AG04450 (cell line): ENCODE measurements at regions of chr10 and their contacts with region 1.

Region 1: GRCh38 chr10:124918191-124918830 is 23.6 kb upstream of the ZRANB1 start:
- DNase-seq: no peak
- H3K4me3 ChIP-seq: peak overlapping the region; percentile 82
- H3K27ac ChIP-seq: peak overlapping the region; percentile 49
- H3K27me3 ChIP-seq: no peaks in the 10 kb centered on the region
- CTCF ChIP-seq: no peak

Region 2: GRCh38 chr10:124860426-124860825 is 57.9 kb before region 1 on chr10:
- CTCF ChIA-PET with region 1: no interaction called
- POLR2A ChIA-PET with region 1: no interaction called
- DNase-seq: no peak
- H3K4me3 ChIP-seq: no peak overlapping the region
- H3K27ac ChIP-seq: no peak overlapping the region
- H3K27me3 ChIP-seq: peaks cover 3% of the 10 kb centered on the region
- CTCF ChIP-seq: no peak

Region 3: DNA sequence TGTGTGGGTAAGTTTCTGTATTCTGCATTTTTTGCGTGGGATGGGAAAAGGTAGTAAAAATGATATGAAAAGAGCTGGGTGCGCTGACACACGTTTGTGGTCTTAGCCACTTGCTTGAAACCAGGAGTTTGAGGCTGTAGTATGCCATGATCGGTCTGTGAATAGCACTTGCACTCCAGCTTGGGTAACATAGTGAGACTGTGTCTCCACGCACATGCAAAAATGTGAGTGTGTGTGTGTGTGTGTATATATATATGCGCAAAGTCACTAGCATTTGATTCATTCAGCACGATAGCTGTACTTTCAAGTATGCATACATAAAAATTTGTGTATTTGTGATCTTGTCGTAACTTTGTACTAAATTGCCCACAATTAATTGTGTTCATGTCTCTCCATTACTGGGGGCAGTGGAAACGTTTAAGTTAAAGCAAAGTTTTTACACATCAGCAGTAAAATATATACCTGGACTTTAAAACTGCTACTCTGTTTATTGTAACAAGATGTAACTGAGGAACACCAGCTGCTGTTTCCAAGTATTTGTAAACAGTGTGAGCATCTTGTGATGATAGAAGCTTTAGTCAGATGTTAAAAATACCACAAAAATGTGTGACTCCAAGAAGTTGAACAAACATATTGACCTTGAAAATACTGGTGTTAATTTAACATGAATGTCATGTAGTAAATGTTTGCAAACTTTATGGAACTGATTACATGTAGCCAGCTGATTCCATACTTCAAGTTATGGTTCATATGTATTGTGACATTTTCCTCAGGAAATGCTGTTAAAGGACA is 25.2 kb after region 1 on chr10:
- CTCF ChIA-PET with region 1: interaction called, 4 read pairs
- POLR2A ChIA-PET with region 1: interaction called, 10 read pairs
- DNase-seq: peak; percentile 88
- H3K4me3 ChIP-seq: no peak overlapping the region
- H3K27ac ChIP-seq: peak overlapping the region; percentile 79
- H3K27me3 ChIP-seq: no peaks in the 10 kb centered on the region
- CTCF ChIP-seq: no peak

Region 4: GRCh38 chr10:125006921-125007426 is 88.7 kb after region 1 on chr10:
- CTCF ChIA-PET with region 1: no interaction called
- POLR2A ChIA-PET with region 1: no interaction called
- DNase-seq: no peak
- H3K4me3 ChIP-seq: no peak overlapping the region
- H3K27ac ChIP-seq: no peak overlapping the region
- H3K27me3 ChIP-seq: no peaks in the 10 kb centered on the region
- CTCF ChIP-seq: no peak

Region 5: DNA sequence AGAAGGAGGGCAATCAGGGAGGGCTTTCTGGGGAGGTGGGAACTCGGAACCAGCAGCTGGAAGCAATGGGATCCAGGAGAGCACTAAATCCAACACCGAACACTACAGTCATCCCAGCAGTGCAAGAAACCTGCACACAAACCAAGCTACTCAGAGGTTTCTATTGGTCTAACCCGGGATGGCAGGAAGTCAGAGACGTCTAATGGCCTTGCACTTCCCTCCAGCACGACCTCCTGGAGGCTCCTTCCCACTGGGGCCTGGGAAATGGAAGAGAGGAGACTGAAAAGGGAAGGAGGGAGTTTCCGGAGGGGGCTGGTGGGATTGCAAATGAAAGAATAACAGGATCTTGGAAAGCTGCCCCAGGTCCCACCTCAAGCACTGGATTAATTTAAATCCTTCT is 708.4 kb after region 1 on chr10:
- CTCF ChIA-PET with region 1: no interaction called
- POLR2A ChIA-PET with region 1: no interaction called
- DNase-seq: no peak
- H3K4me3 ChIP-seq: no peak overlapping the region
- H3K27ac ChIP-seq: no peak overlapping the region
- H3K27me3 ChIP-seq: peaks cover 4% of the 10 kb centered on the region
- CTCF ChIP-seq: no peak